Activated T-helper 2 cell treated with anti-CD3 and anti-CD28 coated beads, Interferon-gamma antibody, Interleukin-2, Interleukin-4, amounts not matched to agents 10 μg/mL and 5 μg/mL and 100 μg/mL, durations not matched to agents 14 hours and 24 hours and 36 hours (primary cell): ENCODE measurements at regions of chr11 and their contacts with region 1.

Region 1: GRCh38 chr11:65013692-65014145 is 241 bp upstream of the ARL2 start:
- DNase-seq: peak; percentile 83
- H3K4me3 Mint-ChIP-seq: peak overlapping the region; percentile 88
- H3K27ac Mint-ChIP-seq: peak overlapping the region; percentile 99
- H3K4me1 Mint-ChIP-seq: peaks cover 18% of the 10 kb centered on the region
- H3K27me3 Mint-ChIP-seq: no peaks in the 10 kb centered on the region

Region 2: DNA sequence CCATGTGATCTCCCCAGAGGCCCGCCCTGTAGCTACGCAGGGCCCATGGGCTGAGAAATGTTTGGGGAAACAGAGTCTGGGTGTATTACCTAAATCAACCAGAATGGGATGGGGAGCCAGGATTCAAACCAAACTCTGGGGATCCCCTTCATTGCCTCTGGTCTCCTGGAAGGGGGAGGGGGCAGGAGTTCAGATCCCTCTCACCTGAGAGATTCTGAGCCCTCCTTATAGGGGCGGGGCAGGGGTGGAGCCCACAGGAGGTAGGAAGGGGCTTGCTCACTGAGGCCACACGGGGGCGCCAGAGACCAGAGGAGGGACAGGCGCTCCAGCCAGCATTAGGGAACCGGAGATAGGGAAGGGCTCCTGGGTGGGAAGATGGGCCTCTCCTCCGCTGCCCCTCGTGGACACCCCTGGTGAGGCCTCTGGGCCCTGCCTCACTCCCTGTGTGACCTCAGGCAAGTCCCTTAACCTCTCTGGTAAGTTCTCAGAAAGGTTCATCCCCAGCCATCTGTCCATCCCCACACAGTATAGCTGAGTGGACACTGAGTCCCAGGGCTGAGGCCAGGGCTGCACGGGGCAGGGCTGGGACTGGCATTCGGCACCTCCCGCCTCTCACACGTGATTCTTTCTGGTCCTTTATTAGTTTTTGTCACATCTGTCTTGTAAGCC is 166.6 kb before region 1 on chr11:
- intact Hi-C with region 1: loop called (anchors 1 kb)
- DNase-seq: peak; percentile 81
- H3K4me3 Mint-ChIP-seq: no peak overlapping the region
- H3K27ac Mint-ChIP-seq: no peak overlapping the region
- H3K4me1 Mint-ChIP-seq: peaks cover 36% of the 10 kb centered on the region
- H3K27me3 Mint-ChIP-seq: no peaks in the 10 kb centered on the region

Region 3: GRCh38 chr11:64924102-64924851 is 89.4 kb before region 1 on chr11 and contains the start of gene PPP2R5B:
- intact Hi-C with region 1: loop called (anchors 2 kb)
- DNase-seq: peak; percentile 89
- H3K4me3 Mint-ChIP-seq: peak within 1 kb of the TSS; percentile 96
- H3K27ac Mint-ChIP-seq: peak within 1 kb of the TSS; percentile 100
- H3K4me1 Mint-ChIP-seq: peaks cover 12% of the 10 kb centered on the region
- H3K27me3 Mint-ChIP-seq: no peaks in the 10 kb centered on the region
- total RNA-seq, gene PPP2R5B: 13.6 and 16.1 TPM in 2 replicates

Region 4: DNA sequence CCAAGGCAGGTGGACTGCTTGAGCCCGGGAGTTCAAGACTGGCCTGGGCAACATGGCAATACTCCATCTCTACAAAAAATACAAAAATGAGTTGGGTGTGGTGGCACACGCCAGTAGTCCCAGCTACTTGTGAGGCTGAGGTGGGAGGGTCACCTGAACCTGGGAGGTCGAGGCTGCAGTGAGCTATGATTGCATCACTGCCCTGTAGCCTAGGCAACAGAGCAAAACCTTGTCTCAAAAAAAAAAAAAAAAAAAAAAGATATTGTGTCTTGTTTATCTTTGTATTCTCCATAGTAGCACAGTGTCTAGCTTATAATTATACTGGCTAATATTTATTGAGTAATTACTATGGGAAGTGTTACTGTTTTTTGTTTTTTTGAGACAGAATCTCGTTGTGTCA is 62.2 kb before region 1 on chr11:
- intact Hi-C with region 1: no loop called
- DNase-seq: no peak
- H3K4me3 Mint-ChIP-seq: no peak overlapping the region
- H3K27ac Mint-ChIP-seq: no peak overlapping the region
- H3K4me1 Mint-ChIP-seq: no peaks in the 10 kb centered on the region
- H3K27me3 Mint-ChIP-seq: peaks cover 10% of the 10 kb centered on the region

Region 5: GRCh38 chr11:65027213-65028067 is 13.7 kb after region 1 on chr11 and contains the start of gene SNX15:
- intact Hi-C with region 1: loop called (anchors 1 kb)
- DNase-seq: peak; percentile 88
- H3K4me3 Mint-ChIP-seq: peak within 1 kb of the TSS; percentile 76
- H3K27ac Mint-ChIP-seq: peak within 1 kb of the TSS; percentile 87
- H3K4me1 Mint-ChIP-seq: peaks cover 15% of the 10 kb centered on the region
- H3K27me3 Mint-ChIP-seq: peaks cover 2% of the 10 kb centered on the region
- total RNA-seq, gene SNX15: 19.6 and 22.4 TPM in 2 replicates

Region 6: DNA sequence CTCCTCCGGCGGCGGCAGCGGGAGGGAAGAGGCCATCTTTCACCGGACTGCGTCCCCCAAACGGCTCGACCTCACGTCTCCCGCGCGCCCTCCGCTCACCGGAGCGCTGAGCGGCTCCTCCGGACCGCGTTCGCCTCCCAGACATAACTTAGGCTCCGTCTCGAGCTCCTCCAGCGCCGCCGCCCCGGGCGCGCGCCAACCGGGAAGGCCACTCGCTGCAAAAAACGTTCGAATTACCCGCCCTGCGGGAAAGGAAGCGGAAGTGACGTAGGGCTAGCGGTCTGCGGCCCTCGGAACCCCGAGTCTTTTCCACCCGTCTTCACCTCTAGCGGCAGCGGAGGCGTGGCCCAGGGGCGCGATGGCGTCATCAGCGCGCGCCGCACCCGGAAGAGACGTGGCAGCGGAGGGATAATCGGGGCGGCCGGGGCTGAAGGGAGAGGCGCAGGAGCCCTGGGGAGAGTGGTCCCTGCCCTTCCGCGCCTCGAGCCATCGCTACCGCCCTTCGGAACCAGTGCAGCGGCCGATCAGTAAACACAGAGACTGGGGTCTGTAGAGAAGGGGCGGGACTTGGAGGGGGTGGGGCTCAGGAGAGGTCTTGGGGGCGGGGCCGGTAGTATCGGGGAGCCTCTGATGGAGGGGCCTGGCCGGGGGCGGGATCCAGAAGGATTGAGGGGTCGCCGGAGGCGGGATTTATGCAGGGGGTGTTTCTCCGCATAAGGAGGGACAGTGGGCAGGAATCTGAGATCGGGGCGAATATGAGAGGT is 70.3 kb after region 1 on chr11 and contains the starts of genes CDCA5 and ZFPL1:
- intact Hi-C with region 1: loop called (anchors 5 kb)
- DNase-seq: peak; percentile 96
- H3K4me3 Mint-ChIP-seq: peak within 1 kb of the TSS; percentile 97
- H3K27ac Mint-ChIP-seq: peak within 1 kb of the TSS; percentile 97
- H3K4me1 Mint-ChIP-seq: peaks cover 32% of the 10 kb centered on the region
- H3K27me3 Mint-ChIP-seq: no peaks in the 10 kb centered on the region
- total RNA-seq, gene CDCA5: 82.0 and 86.8 TPM in 2 replicates
- total RNA-seq, gene ZFPL1: 34.9 and 37.2 TPM in 2 replicates

Region 7: GRCh38 chr11:65095974-65096806 is 82.5 kb after region 1 on chr11 and contains the start of gene VPS51:
- intact Hi-C with region 1: loop called (anchors 2 kb)
- DNase-seq: peak; percentile 82
- H3K4me3 Mint-ChIP-seq: peak within 1 kb of the TSS; percentile 88
- H3K27ac Mint-ChIP-seq: peak within 1 kb of the TSS; percentile 96
- H3K4me1 Mint-ChIP-seq: peaks cover 11% of the 10 kb centered on the region
- H3K27me3 Mint-ChIP-seq: no peaks in the 10 kb centered on the region
- total RNA-seq, gene VPS51: 121 and 133 TPM in 2 replicates

Region 8: GRCh38 chr11:65117216-65118096 is 103.7 kb after region 1 on chr11 and contains the start of gene ZNHIT2:
- intact Hi-C with region 1: loop called (anchors 1 kb)
- DNase-seq: peak; percentile 100
- H3K4me3 Mint-ChIP-seq: peak within 1 kb of the TSS; percentile 84
- H3K27ac Mint-ChIP-seq: peak within 1 kb of the TSS; percentile 88
- H3K4me1 Mint-ChIP-seq: peaks cover 28% of the 10 kb centered on the region
- H3K27me3 Mint-ChIP-seq: no peaks in the 10 kb centered on the region
- total RNA-seq, gene ZNHIT2: 11.3 and 12.8 TPM in 2 replicates